ENCODE measurements at regions of chr20 and their contacts with region 1.

Region 1: GRCh38 chr20:17682103-17682888 is at the start of gene RRBP1:
- DNase-seq: peak; percentile 85 to 99
- H3K4me3 ChIP-seq: peak within 1 kb of the TSS; percentile 66
- H3K27ac ChIP-seq: peak within 1 kb of the TSS; percentile 37; the same call in 1 of the 2 replicates
- H3K4me1 ChIP-seq: peaks cover 24% of the 10 kb centered on the region
- H3K27me3 ChIP-seq: peaks cover 41% of the 10 kb centered on the region
- CTCF ChIP-seq: peak; percentile 86
- total RNA-seq, gene RRBP1: 144 and 156 TPM in 2 replicates

Region 2: GRCh38 chr20:17421493-17421892 is 260.8 kb before region 1 on chr20:
- CTCF ChIA-PET with region 1: no interaction called
- POLR2A ChIA-PET with region 1: no interaction called
- intact Hi-C with region 1: no loop called
- DNase-seq: peak in 1 of 2 experiments; percentile 40
- H3K4me3 ChIP-seq: no peak overlapping the region
- H3K27ac ChIP-seq: no peak overlapping the region
- H3K4me1 ChIP-seq: no peaks in the 10 kb centered on the region
- H3K27me3 ChIP-seq: peaks cover 49% of the 10 kb centered on the region
- CTCF ChIP-seq: no peak

Region 3: DNA sequence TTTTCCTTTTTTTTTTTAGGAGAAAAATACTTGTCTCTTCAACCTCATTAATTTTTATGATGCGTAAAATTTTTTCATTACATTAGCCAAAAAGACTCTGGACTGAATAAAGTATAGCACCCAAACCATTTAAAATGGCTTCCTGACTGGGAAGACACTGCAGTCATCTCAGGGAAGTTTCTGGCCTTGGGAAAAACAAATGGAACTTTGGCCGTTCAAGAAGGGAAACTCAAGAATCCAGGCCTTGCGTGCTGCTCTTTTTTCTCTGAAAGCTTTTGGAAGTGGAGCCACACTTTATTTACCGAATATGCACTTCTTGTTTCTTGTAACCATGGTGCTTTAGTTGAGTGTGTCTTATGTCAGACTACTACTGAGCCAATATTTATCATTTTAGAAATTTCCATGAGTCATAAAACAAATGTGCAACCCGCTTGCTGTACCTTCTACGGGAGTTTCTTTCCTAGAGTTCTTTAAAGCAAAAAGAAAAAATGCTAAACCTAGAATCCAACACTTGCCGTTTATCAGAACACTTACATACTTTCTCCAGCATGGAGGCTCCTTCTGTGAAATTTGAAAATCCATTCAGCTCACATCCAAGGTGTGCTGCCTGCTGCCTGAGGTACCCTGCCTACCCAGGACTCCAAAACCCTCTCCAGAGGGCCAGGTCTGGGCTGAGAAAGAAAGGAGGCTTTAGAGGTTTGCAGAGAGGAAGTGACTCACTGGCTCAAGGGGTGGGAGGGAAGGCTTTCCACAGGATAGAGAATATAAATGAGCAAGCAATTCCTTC is 123.9 kb before region 1 on chr20:
- CTCF ChIA-PET with region 1: no interaction called
- POLR2A ChIA-PET with region 1: no interaction called
- intact Hi-C with region 1: loop called (anchors 5 kb)
- DNase-seq: peak; percentile 74 to 90
- H3K4me3 ChIP-seq: peak overlapping the region; percentile 51
- H3K27ac ChIP-seq: peak overlapping the region; percentile 92
- H3K4me1 ChIP-seq: peaks cover 82% of the 10 kb centered on the region
- H3K27me3 ChIP-seq: no peaks in the 10 kb centered on the region
- CTCF ChIP-seq: no peak

Region 4: GRCh38 chr20:17648791-17649730 is 33.2 kb before region 1 on chr20:
- CTCF ChIA-PET with region 1: no interaction called
- POLR2A ChIA-PET with region 1: no interaction called
- intact Hi-C with region 1: no loop called
- DNase-seq: peak in 1 of 2 experiments; percentile 12
- H3K4me3 ChIP-seq: no peak overlapping the region
- H3K27ac ChIP-seq: no peak overlapping the region
- H3K4me1 ChIP-seq: no peaks in the 10 kb centered on the region
- H3K27me3 ChIP-seq: no peaks in the 10 kb centered on the region
- CTCF ChIP-seq: peak; percentile 46

Region 5: GRCh38 chr20:17666481-17666880 is 15.8 kb before region 1 on chr20:
- CTCF ChIA-PET with region 1: no interaction called
- POLR2A ChIA-PET with region 1: interaction called, 28 read pairs
- intact Hi-C with region 1: no loop called
- DNase-seq: no peak
- H3K4me3 ChIP-seq: no peak overlapping the region
- H3K27ac ChIP-seq: no peak overlapping the region
- H3K4me1 ChIP-seq: no peaks in the 10 kb centered on the region
- H3K27me3 ChIP-seq: no peaks in the 10 kb centered on the region
- CTCF ChIP-seq: no peak

Region 6: DNA sequence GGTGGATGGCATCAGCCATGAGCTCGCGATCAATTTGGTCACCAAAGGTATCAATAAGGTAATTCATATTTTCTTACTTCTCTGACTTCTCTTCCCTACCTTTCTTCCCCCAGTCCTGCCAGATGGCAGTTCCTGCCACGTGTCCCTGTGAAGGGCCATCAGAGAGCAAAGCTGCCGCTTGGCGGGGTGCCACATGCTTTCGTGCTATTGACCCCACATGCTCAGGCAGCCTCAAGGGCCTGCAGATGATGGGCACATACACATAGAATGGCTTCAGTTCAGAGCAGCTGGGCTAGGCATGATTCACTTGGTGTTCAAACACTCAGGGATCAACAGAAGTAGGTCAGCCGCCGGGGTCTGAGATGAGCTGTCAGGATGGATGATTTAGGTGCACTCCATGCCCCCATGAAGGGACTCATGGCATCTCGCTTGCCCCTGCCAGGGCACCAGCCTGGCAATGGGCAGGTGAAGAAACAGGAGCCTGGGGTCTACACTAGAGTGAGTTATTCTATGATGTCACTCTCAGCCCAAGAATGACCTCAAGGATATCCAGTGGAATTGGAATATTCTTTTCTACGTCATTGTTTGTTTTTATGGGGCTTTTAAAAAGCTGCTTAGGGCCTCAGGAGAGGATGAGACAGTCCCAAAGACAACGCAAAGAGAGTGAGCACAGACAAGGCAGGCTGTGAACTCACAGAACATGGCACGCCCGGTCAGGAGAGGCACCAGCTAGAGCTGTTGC is 43.0 kb after region 1 on chr20:
- CTCF ChIA-PET with region 1: no interaction called
- POLR2A ChIA-PET with region 1: no interaction called
- intact Hi-C with region 1: no loop called
- DNase-seq: no peak
- H3K4me3 ChIP-seq: no peak overlapping the region
- H3K27ac ChIP-seq: no peak overlapping the region
- H3K4me1 ChIP-seq: no peaks in the 10 kb centered on the region
- H3K27me3 ChIP-seq: peaks cover 32% of the 10 kb centered on the region; the same call in 1 of the 2 replicates
- CTCF ChIP-seq: no peak

Region 7: GRCh38 chr20:17885544-17885943 is 203.2 kb after region 1 on chr20:
- CTCF ChIA-PET with region 1: no interaction called
- POLR2A ChIA-PET with region 1: interaction called, 4 read pairs
- intact Hi-C with region 1: loop called (anchors 2 kb)
- DNase-seq: no peak
- H3K4me3 ChIP-seq: no peak overlapping the region
- H3K27ac ChIP-seq: no peak overlapping the region
- H3K4me1 ChIP-seq: no peaks in the 10 kb centered on the region
- H3K27me3 ChIP-seq: no peaks in the 10 kb centered on the region
- CTCF ChIP-seq: no peak

Region 8: DNA sequence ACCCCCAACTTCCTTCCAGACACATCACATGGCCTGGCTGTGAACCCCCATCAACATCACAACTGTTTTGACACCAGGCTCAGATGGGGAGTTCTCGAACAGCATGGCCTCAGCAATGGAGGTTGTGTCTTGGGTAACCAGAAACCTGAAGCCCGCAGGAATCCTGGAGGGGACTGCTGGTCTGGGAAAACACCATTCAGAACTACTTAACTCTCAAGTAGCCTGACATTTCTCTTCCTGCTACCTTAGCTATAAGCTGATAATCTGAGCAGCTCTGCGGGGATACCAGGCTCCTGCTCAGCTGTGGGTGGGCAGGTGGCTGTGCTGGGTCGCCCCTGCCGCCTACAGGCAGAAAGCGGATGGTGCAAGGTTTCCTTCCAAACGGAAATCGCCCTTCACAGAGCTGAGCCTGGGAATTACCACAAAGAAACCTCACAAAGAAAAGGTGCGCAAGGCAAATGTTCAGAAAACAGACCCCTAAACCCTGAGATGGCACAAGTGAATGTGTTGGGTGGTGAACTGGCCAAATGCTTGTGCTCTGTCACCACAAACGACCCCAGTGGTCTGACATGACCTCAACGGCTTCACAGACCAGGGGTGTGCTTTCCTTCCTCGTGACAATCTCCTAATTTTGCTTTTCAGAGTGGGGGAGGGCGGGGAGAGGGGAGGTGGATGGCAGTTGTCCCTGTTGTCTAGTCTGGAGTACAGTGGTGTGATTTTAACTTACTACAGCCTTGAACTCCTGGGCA is 256.7 kb after region 1 on chr20:
- CTCF ChIA-PET with region 1: interaction called, 8 read pairs
- POLR2A ChIA-PET with region 1: no interaction called
- intact Hi-C with region 1: loop called (anchors 1 kb)
- DNase-seq: peak in 1 of 2 experiments; percentile 70
- H3K4me3 ChIP-seq: no peak overlapping the region
- H3K27ac ChIP-seq: no peak overlapping the region
- H3K4me1 ChIP-seq: no peaks in the 10 kb centered on the region
- H3K27me3 ChIP-seq: no peaks in the 10 kb centered on the region
- CTCF ChIP-seq: peak; percentile 82